ENCODE measurements at regions of chr7 and their contacts with region 1.

Region 1: DNA sequence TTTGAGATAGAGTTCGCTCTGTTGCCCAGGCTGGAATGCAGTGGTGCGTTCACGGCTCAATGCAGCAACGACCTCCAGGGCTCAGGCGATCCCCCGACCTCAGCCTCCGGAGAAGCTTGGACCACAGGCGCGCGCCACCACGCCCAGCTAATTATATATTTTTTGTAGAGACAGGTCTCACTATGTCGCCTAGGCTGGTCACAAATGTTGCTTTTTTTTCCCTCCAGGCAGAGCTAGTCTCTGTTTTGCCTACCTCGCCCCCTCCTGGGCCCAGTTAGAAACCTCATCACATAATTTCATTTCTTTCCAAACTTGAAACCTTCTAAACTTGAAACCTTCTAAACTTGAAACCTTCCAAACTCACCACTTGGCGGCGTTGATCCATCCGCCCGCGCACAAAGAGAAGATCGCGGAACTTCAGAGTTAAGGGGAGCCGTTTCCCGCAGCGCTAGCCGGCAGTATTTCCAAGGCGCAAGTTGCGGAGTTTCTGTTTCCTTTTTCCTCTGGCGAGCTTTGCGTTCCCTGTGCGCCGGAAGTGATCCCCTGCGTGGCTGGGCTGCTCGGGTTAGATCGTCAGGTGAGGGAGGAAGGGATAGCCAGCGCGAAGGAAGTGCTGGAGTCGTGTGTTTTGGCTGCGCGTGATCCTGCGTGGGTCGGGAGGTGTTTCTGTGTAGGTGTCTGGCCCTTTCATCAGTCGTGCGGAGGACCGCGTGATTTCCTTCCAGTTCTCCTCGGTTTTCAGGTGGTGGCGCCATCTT is at the start of gene SSBP1:
- DNase-seq: peak; percentile 83 to 97 (median 88)
- ATAC-seq: peak; percentile 82
- H3K4me3 ChIP-seq: peak within 1 kb of the TSS; percentile 76
- H3K4me3 Mint-ChIP-seq: peak within 1 kb of the TSS; percentile 97
- H3K27ac ChIP-seq: peak within 1 kb of the TSS; percentile 86 to 89
- H3K27ac Mint-ChIP-seq: peak within 1 kb of the TSS; percentile 93
- H3K4me1 ChIP-seq: peaks cover 25% of the 10 kb centered on the region
- H3K4me1 Mint-ChIP-seq: peaks cover 46% of the 10 kb centered on the region
- H3K27me3 ChIP-seq: no peaks in the 10 kb centered on the region
- H3K27me3 Mint-ChIP-seq: no peaks in the 10 kb centered on the region
- CTCF ChIP-seq: peak; percentile 95
- total RNA-seq, gene SSBP1: 108 to 116 TPM

Region 2: DNA sequence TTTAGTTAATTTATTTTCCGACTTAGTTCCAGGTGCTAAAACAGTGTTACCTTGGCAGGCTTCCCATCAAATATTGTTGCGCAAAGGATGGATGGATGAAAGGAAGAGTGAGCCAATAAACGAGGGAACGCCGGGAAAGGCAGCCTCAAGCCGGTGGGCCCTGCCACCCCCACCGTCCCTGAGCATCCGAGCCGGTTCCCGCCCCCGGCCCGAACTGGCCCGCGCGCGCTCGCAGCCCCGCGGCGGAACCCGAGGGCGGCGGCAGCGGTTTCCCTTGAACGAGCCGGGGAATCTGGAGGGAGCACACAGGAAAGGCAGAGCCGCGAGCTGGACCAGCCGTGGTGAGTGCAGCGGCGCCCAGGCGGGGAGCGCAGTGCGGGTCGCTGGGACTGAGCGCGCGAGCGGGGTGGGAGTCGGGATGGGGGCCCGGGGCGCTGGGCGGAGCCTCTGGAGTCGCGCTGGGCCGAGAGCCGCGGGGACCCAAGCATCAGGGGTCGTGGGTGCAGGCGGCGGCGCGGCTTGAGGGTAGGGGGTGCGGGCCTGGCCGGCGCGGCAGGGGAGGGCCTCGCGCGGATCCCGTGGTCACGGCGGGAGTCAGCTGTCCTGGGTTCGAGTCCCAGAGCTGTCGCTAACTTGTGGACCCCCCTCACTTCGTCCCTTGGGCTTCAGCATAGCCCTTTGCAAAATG is 186.8 kb before region 1 on chr7 and contains the start of gene AGK:
- CTCF ChIA-PET with region 1: interaction called, 3 read pairs
- POLR2A ChIA-PET with region 1: interaction called, 28 read pairs
- intact Hi-C with region 1: loop called (anchors 1 to 2 kb)
- DNase-seq: peak; percentile 56 to 84 (median 72)
- ATAC-seq: peak; percentile 97
- H3K4me3 ChIP-seq: peak within 1 kb of the TSS; percentile 62
- H3K4me3 Mint-ChIP-seq: peak within 1 kb of the TSS; percentile 96
- H3K27ac ChIP-seq: no peak within 1 kb of the TSS
- H3K27ac Mint-ChIP-seq: peak within 1 kb of the TSS; percentile 72
- H3K4me1 ChIP-seq: peaks cover 17% of the 10 kb centered on the region
- H3K4me1 Mint-ChIP-seq: peaks cover 33% of the 10 kb centered on the region
- H3K27me3 ChIP-seq: no peaks in the 10 kb centered on the region
- H3K27me3 Mint-ChIP-seq: no peaks in the 10 kb centered on the region
- CTCF ChIP-seq: no peak
- total RNA-seq, gene AGK: 18.9 to 20.5 TPM

Region 3: DNA sequence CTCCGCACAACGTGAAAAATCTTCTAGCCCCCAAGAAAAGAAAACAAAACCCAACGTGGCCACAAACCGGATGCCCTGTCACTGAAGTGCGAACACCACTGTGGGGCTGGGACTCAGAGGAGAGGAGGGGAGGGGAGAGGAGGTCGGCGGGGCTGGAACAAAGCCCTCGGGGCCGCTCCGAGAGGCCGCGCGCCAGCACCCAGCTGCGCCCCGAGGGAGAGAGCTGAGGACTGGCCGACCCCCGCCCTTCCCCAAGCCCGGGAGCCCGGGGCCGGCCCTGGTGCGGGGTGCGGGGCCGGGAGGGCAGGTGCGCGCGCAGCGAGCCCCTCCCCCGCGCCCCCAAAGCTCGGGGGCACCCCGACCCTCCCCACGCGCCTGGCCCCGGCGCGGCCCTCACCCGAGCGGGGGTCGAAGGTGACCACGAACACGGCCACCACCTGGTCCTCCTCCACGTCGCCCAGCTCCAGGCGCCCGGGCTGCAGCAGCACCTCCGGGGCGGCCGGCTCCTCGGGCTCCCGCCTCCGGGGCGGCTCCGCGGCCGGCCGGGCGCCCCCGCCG is 36.4 kb before region 1 on chr7:
- CTCF ChIA-PET with region 1: interaction called, 38 read pairs
- POLR2A ChIA-PET with region 1: interaction called, 103 read pairs
- intact Hi-C with region 1: loop called (anchors 1 to 2 kb)
- DNase-seq: peak; percentile 47 to 89 (median 64)
- ATAC-seq: peak; percentile 82
- H3K4me3 ChIP-seq: peak overlapping the region; percentile 68
- H3K4me3 Mint-ChIP-seq: peak overlapping the region; percentile 96
- H3K27ac ChIP-seq: peak overlapping the region in 1 of 2 donors; percentile 76
- H3K27ac Mint-ChIP-seq: peak overlapping the region; percentile 90
- H3K4me1 ChIP-seq: peaks cover 34% of the 10 kb centered on the region
- H3K4me1 Mint-ChIP-seq: peaks cover 54% of the 10 kb centered on the region
- H3K27me3 ChIP-seq: no peaks in the 10 kb centered on the region
- H3K27me3 Mint-ChIP-seq: no peaks in the 10 kb centered on the region
- CTCF ChIP-seq: no peak

Region 4: GRCh38 chr7:141754939-141755338 is 16.9 kb after region 1 on chr7:
- CTCF ChIA-PET with region 1: no interaction called
- POLR2A ChIA-PET with region 1: no interaction called
- intact Hi-C with region 1: no loop called
- DNase-seq: peak in 4 of 14 experiments; percentile 4 to 46 (median 33)
- ATAC-seq: peak; percentile 59
- H3K4me3 ChIP-seq: no peak overlapping the region
- H3K4me3 Mint-ChIP-seq: no peak overlapping the region
- H3K27ac ChIP-seq: no peak overlapping the region
- H3K27ac Mint-ChIP-seq: no peak overlapping the region
- H3K4me1 ChIP-seq: no peaks in the 10 kb centered on the region
- H3K4me1 Mint-ChIP-seq: no peaks in the 10 kb centered on the region
- H3K27me3 ChIP-seq: no peaks in the 10 kb centered on the region
- H3K27me3 Mint-ChIP-seq: no peaks in the 10 kb centered on the region
- CTCF ChIP-seq: peak; percentile 35

Measured in CD4-positive, alpha-beta T cell (primary cell).